Activated CD4-positive, alpha-beta memory T cell treated with anti-CD3 and anti-CD28 coated beads for 36 hours (primary cell): ENCODE measurements at regions of chr6 and their contacts with region 1.

Region 1: DNA sequence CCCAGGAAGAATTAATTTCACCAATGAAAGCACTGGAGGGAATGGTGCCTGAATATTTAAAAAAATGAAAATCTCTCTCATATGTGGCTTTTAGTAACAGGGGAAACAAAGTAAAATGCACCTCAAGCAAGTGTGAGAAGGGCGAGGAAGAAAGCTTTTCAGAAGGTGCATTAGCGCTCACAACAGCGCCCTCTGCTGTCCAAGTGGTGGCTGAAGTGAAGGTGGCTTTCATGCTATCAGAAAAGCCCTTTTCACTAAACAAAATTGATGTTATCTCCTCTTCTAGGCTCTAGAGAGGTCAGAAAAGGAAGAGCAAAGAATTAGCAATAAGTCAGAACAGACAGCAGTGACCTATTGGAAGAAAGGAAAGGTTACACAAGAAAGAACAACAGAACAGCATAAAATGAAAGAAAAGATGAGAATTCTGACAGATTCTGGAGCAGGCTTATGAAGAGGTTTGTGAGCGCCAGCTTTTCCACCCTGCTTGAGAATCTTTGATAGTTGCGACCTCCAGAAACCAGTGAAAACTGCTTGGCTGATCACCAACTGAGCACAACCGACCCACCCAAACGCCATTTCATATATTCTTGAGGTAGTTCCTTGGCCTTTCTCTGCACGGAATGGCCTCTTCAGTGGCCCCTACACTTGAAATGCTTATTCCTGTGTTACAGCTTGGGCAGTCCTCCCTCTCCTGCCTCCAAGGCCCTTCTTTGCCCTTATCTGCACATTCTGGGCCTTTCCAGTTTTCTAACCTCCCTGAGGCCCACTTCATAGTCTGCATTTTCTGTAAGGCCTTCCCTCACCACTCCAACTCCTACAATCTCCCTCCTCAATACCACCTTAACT is 45.3 kb downstream of the SMLR1 start:
- DNase-seq: peak; percentile 79
- H3K4me3 Mint-ChIP-seq: no peak overlapping the region
- H3K27ac Mint-ChIP-seq: no peak overlapping the region
- H3K4me1 Mint-ChIP-seq: no peaks in the 10 kb centered on the region
- H3K27me3 Mint-ChIP-seq: no peaks in the 10 kb centered on the region

Region 2: DNA sequence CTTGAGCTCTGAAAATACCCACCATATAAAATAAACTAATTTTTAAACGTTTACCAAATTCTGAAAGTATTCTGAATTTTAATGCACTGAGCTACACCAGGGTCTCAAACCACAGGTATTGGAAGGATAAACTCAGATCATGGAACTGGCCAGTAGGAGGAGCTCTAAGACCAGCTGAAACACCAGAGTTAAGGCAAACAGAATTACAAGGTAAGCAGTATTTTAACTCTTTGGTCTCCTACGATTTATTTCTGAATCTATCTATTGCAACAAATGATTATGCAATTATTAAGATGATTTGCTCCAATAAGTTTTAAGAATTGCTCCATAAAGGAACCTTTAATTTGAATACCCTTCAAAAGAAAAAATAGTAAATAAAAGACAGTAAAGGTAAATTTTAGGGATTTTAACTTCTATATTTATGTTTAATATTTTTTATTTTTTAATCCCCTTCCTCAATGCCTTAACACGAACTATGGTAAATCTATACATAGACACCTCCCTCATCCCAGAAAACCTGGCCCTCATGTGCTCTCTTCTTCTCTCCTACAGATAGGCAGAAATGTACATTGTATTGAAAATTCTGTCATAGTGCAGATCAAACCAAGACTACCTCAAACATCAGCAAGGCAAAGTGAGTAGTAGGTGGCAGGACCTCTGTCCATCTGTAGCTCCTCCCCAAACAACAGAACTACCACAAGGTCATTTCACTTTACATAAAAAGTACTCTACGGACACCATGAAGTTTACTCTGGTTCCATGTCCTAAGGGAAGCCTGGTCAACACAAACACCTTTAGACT is 13.1 kb after region 1 on chr6:
- CTCF ChIA-PET with region 1: interaction called, 35 read pairs
- POLR2A ChIA-PET with region 1: no interaction called
- intact Hi-C with region 1: no loop called
- DNase-seq: peak; percentile 72
- H3K4me3 Mint-ChIP-seq: no peak overlapping the region
- H3K27ac Mint-ChIP-seq: no peak overlapping the region
- H3K4me1 Mint-ChIP-seq: no peaks in the 10 kb centered on the region
- H3K27me3 Mint-ChIP-seq: no peaks in the 10 kb centered on the region